CD8-positive, alpha-beta T cell (primary cell): ENCODE measurements at regions of chr2 and their contacts with region 1.

Region 1: GRCh38 chr2:10448208-10448645 is at the start of gene ODC1:
- DNase-seq: peak; percentile 96 to 100 (median 98)
- ATAC-seq: peak; percentile 81
- H3K4me3 ChIP-seq: peak within 1 kb of the TSS; percentile 61 to 83
- H3K4me3 Mint-ChIP-seq: peak within 1 kb of the TSS; percentile 85
- H3K27ac ChIP-seq: peak within 1 kb of the TSS; percentile 87 to 97
- H3K27ac Mint-ChIP-seq: peak within 1 kb of the TSS; percentile 88
- H3K4me1 ChIP-seq: peaks cover 23% of the 10 kb centered on the region
- H3K4me1 Mint-ChIP-seq: peaks cover 39% of the 10 kb centered on the region
- H3K27me3 ChIP-seq: no peaks in the 10 kb centered on the region
- H3K27me3 Mint-ChIP-seq: no peaks in the 10 kb centered on the region
- CTCF ChIP-seq: no peak
- total RNA-seq, gene ODC1: 157 to 162 TPM

Region 2: GRCh38 chr2:9555297-9556141 is 892.7 kb before region 1 on chr2 and contains the start of gene ADAM17:
- CTCF ChIA-PET with region 1: no interaction called
- POLR2A ChIA-PET with region 1: no interaction called
- intact Hi-C with region 1: loop called in 1 of 2 experiments (anchors 5 kb)
- DNase-seq: peak; percentile 62 to 93 (median 81)
- ATAC-seq: peak; percentile 88
- H3K4me3 ChIP-seq: peak within 1 kb of the TSS; percentile 91 to 96
- H3K4me3 Mint-ChIP-seq: peak within 1 kb of the TSS; percentile 94
- H3K27ac ChIP-seq: peak within 1 kb of the TSS; percentile 93 to 94
- H3K27ac Mint-ChIP-seq: peak within 1 kb of the TSS; percentile 93
- H3K4me1 ChIP-seq: peaks cover 37% of the 10 kb centered on the region
- H3K4me1 Mint-ChIP-seq: peaks cover 49% of the 10 kb centered on the region
- H3K27me3 ChIP-seq: no peaks in the 10 kb centered on the region
- H3K27me3 Mint-ChIP-seq: no peaks in the 10 kb centered on the region
- CTCF ChIP-seq: no peak
- total RNA-seq, gene ADAM17: 20.0 to 25.1 TPM

Region 3: DNA sequence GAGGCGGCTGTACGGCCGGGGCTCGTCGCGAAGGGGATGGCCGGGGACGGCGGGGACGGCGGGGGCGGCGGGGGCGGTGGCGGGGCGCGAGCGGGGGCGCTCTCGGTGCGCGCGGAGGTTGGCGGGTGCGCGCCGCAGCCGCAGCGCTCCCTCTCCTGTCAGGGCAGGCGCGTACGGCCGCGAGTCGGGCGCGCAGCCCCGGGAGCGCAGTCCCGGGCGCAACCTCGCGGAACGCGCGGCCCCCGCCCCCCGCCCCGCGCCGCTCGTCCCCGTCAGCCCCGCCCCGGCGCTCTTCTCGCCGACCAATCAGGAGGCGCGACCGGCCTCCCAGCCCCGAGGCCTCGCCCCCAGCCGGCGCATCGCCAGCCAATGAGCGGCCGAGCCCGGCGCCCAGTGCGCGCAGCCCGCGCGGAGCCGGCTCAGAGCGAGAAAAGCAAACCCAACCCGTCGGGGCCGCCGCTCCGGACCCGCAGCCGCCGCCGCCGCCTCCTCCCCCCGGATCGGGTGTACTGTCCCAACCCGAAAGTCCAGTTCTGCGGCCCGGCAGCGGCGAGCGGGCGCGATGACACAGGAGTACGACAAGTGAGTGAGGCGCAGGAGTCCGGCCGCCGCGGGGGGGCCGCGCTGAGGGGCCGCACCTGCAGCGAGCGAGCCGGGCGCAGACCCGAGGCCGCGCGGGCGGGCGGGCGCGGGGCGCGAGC is 496.8 kb before region 1 on chr2 and contains the start of gene GRHL1:
- CTCF ChIA-PET with region 1: no interaction called
- POLR2A ChIA-PET with region 1: no interaction called
- intact Hi-C with region 1: loop called in 1 of 2 experiments (anchors 5 kb)
- DNase-seq: peak; percentile 77 to 96 (median 89)
- ATAC-seq: peak; percentile 94
- H3K4me3 ChIP-seq: peak within 1 kb of the TSS; percentile 52 to 58
- H3K4me3 Mint-ChIP-seq: peak within 1 kb of the TSS; percentile 84
- H3K27ac ChIP-seq: no peak within 1 kb of the TSS
- H3K27ac Mint-ChIP-seq: peak within 1 kb of the TSS; percentile 41
- H3K4me1 ChIP-seq: peaks cover 11% of the 10 kb centered on the region
- H3K4me1 Mint-ChIP-seq: peaks cover 6% of the 10 kb centered on the region
- H3K27me3 ChIP-seq: peaks cover 8% of the 10 kb centered on the region in 2 experiments
- H3K27me3 Mint-ChIP-seq: peaks cover 42% of the 10 kb centered on the region
- CTCF ChIP-seq: no peak
- total RNA-seq, gene GRHL1: 0.76 to 0.86 TPM

Region 4: DNA sequence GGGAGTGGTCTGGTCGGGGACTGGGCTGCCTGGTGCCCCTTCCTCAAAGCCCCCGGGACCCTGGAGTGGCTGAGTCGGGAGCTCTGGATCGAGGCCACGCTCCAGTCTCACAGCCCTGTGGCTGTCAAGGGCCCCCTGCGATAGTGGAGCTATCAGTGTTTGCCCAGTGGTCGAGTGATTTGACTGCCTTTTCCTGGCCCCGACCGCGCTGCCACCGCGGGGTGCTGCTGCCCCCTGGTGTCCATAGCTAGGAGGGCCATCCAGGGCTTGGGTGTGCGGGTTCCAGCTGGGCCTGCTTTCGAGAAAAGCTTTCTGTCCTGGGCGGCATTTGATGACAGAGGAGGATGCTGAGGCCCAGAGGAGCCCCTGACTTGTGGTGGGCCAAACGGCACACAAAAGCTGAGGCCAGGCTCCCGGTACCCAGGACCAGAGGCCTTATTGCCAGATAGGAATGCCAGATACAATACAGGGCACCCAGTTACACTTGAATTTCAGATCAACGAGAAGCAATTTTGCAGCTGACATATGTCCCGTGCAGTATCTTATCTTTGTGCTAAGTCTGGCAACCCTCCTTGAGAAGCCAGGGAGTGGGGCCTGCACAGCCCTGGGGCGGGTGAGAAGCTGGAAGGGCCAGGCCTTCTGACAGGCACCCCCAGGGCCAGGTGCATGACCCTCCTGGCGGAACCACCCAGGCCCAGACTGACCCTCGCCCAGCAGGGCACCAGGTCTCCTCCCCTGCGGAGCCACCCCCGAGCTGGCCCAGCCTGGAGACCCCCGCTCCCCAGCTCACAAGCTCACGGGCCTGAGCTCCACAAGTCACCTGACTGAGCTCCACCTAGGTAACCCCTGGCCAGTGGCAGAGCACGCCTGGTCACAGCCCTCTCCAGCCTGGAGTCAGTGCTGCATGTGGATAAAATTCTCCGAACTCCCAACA is 13.1 kb before region 1 on chr2:
- CTCF ChIA-PET with region 1: interaction called, 15 read pairs
- POLR2A ChIA-PET with region 1: interaction called, 11 read pairs
- intact Hi-C with region 1: no loop called
- DNase-seq: peak; percentile 51 to 86 (median 74)
- ATAC-seq: peak; percentile 74
- H3K4me3 ChIP-seq: no peak overlapping the region
- H3K4me3 Mint-ChIP-seq: no peak overlapping the region
- H3K27ac ChIP-seq: no peak overlapping the region
- H3K27ac Mint-ChIP-seq: no peak overlapping the region
- H3K4me1 ChIP-seq: peaks cover 14% of the 10 kb centered on the region
- H3K4me1 Mint-ChIP-seq: peaks cover 16% of the 10 kb centered on the region
- H3K27me3 ChIP-seq: peaks cover 0 to 4% of the 10 kb centered on the region in 2 experiments
- H3K27me3 Mint-ChIP-seq: peaks cover 2% of the 10 kb centered on the region
- CTCF ChIP-seq: peak; percentile 93

Region 5: GRCh38 chr2:10668402-10669012 is 220.3 kb after region 1 on chr2:
- CTCF ChIA-PET with region 1: no interaction called
- POLR2A ChIA-PET with region 1: no interaction called
- intact Hi-C with region 1: loop called in 1 of 2 experiments (anchors 5 kb)
- DNase-seq: peak in 3 of 9 experiments; percentile 39 to 78 (median 74)
- ATAC-seq: peak; percentile 77
- H3K4me3 ChIP-seq: no peak overlapping the region
- H3K4me3 Mint-ChIP-seq: no peak overlapping the region
- H3K27ac ChIP-seq: no peak overlapping the region
- H3K27ac Mint-ChIP-seq: no peak overlapping the region
- H3K4me1 ChIP-seq: no peaks in the 10 kb centered on the region
- H3K4me1 Mint-ChIP-seq: peaks cover 2% of the 10 kb centered on the region
- H3K27me3 ChIP-seq: no peaks in the 10 kb centered on the region
- H3K27me3 Mint-ChIP-seq: no peaks in the 10 kb centered on the region
- CTCF ChIP-seq: peak; percentile 86

Region 6: GRCh38 chr2:11465497-11466406 is 1017.5 kb after region 1 on chr2 and contains the start of gene E2F6:
- CTCF ChIA-PET with region 1: no interaction called
- POLR2A ChIA-PET with region 1: no interaction called
- intact Hi-C with region 1: loop called in 1 of 2 experiments (anchors 10 kb)
- DNase-seq: peak; percentile 68 to 91 (median 81)
- ATAC-seq: peak; percentile 85
- H3K4me3 ChIP-seq: peak within 1 kb of the TSS; percentile 83 to 87
- H3K4me3 Mint-ChIP-seq: peak within 1 kb of the TSS; percentile 96
- H3K27ac ChIP-seq: peak within 1 kb of the TSS; percentile 51 to 70
- H3K27ac Mint-ChIP-seq: peak within 1 kb of the TSS; percentile 91
- H3K4me1 ChIP-seq: peaks cover 13% of the 10 kb centered on the region
- H3K4me1 Mint-ChIP-seq: peaks cover 37% of the 10 kb centered on the region
- H3K27me3 ChIP-seq: no peaks in the 10 kb centered on the region
- H3K27me3 Mint-ChIP-seq: no peaks in the 10 kb centered on the region
- CTCF ChIP-seq: no peak
- total RNA-seq, gene E2F6: 4.9 to 5.0 TPM